ENCODE measurements at regions of chr6 and their contacts with region 1.

Region 1: GRCh38 chr6:83893024-83893423 is 33.5 kb downstream of the CYB5R4 start:
- DNase-seq: no peak
- ATAC-seq: no peak
- H3K4me3 ChIP-seq: no peak overlapping the region
- H3K27ac ChIP-seq: no peak overlapping the region
- H3K4me1 ChIP-seq: no peaks in the 10 kb centered on the region
- H3K27me3 ChIP-seq: no peaks in the 10 kb centered on the region
- CTCF ChIP-seq: no peak
- EP300 ChIP-seq: no peak
- POLR2A ChIP-seq: no peak
- RAD21 ChIP-seq: no peak

Region 2: DNA sequence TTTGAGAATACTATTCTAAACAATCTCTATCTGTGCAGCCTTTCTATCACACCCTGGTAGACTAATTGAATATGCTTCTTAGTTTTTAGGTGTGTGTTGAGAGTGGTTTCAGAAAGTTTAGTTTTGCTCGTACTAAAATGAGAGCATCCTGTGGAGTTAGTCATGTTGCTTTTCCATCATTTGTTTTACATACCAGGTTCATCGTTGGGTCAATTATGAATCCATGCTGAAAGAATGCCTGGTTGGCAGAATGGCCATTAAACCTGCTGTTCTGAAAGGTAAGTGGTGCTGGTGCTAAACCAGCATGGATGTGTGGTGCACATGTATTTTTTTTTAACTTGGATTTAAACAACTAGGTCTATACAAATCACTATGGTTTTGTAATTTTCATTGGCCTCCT is 15.8 kb after region 1 on chr6:
- CTCF ChIA-PET with region 1: no interaction called
- POLR2A ChIA-PET with region 1: no interaction called
- in situ Hi-C with region 1: no loop called
- intact Hi-C with region 1: no loop called
- DNase-seq: no peak
- ATAC-seq: no peak
- H3K4me3 ChIP-seq: no peak overlapping the region
- H3K27ac ChIP-seq: no peak overlapping the region
- H3K4me1 ChIP-seq: peaks cover 4 to 12% of the 10 kb centered on the region in 2 experiments; a peak in 3 of 5 replicates
- H3K27me3 ChIP-seq: no peaks in the 10 kb centered on the region
- CTCF ChIP-seq: no peak
- EP300 ChIP-seq: no peak
- POLR2A ChIP-seq: no peak
- RAD21 ChIP-seq: no peak

Region 3: GRCh38 chr6:84061613-84062398 is 168.8 kb after region 1 on chr6:
- CTCF ChIA-PET with region 1: no interaction called
- POLR2A ChIA-PET with region 1: no interaction called
- in situ Hi-C with region 1: no loop called
- intact Hi-C with region 1: loop called (anchors 5 kb)
- DNase-seq: peak in 1 of 4 experiments; percentile 25
- ATAC-seq: peak; percentile 31
- H3K4me3 ChIP-seq: no peak overlapping the region
- H3K27ac ChIP-seq: no peak overlapping the region; the same call in 2 of the 3 replicates
- H3K4me1 ChIP-seq: peaks cover 0 to 27% of the 10 kb centered on the region in 2 experiments; a peak in 4 of 5 replicates
- H3K27me3 ChIP-seq: no peaks in the 10 kb centered on the region
- CTCF ChIP-seq: no peak
- EP300 ChIP-seq: no peak
- POLR2A ChIP-seq: no peak
- RAD21 ChIP-seq: 0 out of 4 replicates have a peak, but pooled peaks of 1 of the 2 experiments have one; percentile 2

Region 4: DNA sequence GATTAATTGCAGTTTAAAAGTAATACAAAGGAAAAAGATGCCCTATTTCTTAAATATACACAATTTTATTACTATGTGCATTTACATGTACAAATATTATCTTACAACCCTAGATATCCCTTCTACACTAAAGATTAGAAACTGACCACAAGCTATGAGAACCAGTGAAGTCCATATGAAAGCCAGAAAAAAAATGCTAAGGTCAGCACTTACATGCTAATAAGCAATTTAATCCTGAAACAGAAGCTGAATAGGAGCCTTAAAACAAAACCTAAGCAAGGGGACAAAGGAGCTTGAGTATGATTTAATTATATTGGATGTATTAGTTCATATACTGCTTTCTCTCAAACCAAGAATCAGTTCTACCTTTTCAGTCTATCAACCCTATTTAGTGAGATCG is 320.2 kb after region 1 on chr6:
- CTCF ChIA-PET with region 1: no interaction called
- POLR2A ChIA-PET with region 1: no interaction called
- in situ Hi-C with region 1: loop called (anchors 5 kb)
- intact Hi-C with region 1: no loop called
- DNase-seq: no peak
- ATAC-seq: no peak
- H3K4me3 ChIP-seq: no peak overlapping the region
- H3K27ac ChIP-seq: no peak overlapping the region
- H3K4me1 ChIP-seq: no peaks in the 10 kb centered on the region
- H3K27me3 ChIP-seq: no peaks in the 10 kb centered on the region
- CTCF ChIP-seq: no peak
- EP300 ChIP-seq: no peak
- POLR2A ChIP-seq: no peak
- RAD21 ChIP-seq: no peak

Measured in K562 (cell line).